Breast epithelium (tissue), 4 donors: ENCODE measurements at regions of chr4 and their contacts with region 1.

Region 1: DNA sequence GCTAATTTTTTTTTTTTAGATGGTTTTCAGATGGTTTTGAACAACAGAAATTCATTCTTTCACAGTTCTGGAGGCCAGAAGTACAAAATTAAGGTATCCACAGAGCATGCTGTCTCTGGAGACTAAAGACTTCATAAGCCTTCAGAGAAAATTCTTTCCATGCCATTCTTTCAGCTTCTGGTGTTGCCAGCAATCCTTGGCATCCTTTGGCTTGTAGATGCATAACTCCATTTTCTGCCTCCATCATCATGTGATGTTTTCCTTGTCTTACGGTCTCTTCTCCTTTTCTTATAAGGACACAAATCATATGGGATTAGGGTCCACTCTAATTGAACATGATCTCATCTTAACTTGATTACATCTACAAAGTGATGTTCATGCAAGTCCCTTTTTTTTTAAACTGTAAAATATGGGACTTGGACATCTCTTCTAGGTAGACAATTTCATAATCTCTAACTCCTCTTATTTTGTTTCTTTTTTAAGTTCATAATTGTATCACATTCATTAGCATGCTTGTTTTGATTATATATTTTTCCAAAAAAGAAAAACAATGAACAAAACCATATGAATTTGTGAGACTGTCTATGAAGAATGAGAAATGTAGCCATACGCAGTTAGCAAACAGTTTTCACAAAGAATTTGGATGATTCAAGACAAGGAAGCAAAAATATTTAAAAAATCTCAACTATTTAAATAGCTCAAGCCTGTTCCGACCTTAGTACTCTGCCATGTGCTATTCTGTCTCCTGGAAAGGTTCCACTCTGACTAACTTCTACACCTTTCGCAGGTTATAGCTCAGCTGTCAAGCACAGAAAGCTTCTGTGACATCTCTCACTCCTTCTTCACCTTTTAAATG is 53.1 kb upstream of the GIMD1 start:
- DNase-seq: no peak
- H3K4me3 ChIP-seq: no peak overlapping the region
- H3K27ac ChIP-seq: no peak overlapping the region
- H3K4me1 ChIP-seq: no peaks in the 10 kb centered on the region
- H3K27me3 ChIP-seq: no peaks in the 10 kb centered on the region
- CTCF ChIP-seq: no peak
- POLR2A ChIP-seq: no peak

Region 2: GRCh38 chr4:105909787-105910281 is 511.8 kb before region 1 on chr4:
- intact Hi-C with region 1: loop called (anchors 5 kb)
- DNase-seq: no peak
- H3K4me3 ChIP-seq: no peak overlapping the region
- H3K27ac ChIP-seq: no peak overlapping the region
- H3K4me1 ChIP-seq: no peaks in the 10 kb centered on the region
- H3K27me3 ChIP-seq: no peaks in the 10 kb centered on the region
- CTCF ChIP-seq: no peak
- POLR2A ChIP-seq: no peak

Region 3: DNA sequence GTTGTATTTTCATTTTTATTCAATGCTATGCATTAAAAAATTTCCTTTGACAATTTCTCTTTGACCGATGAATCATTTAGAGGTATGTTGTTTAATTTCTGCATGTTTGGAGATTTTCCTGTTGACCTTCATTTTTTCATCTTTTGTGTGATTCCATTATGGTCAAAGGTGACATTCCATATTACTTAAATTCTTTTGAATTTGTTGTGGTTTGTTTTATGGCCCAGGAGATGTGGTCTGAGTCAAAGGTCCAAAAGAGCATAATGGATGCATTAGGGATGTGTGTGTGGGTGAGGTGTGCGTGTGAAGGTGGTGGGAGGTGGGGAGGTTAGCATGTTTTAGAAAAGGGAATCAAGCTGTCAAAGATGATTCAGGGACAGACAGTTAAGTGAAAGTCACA is 22.9 kb after region 1 on chr4:
- intact Hi-C with region 1: no loop called
- DNase-seq: no peak
- H3K4me3 ChIP-seq: no peak overlapping the region
- H3K27ac ChIP-seq: no peak overlapping the region
- H3K4me1 ChIP-seq: no peaks in the 10 kb centered on the region
- H3K27me3 ChIP-seq: no peaks in the 10 kb centered on the region
- CTCF ChIP-seq: no peak
- POLR2A ChIP-seq: no peak